IMR-90 (cell line): ENCODE measurements at regions of chr5 and their contacts with region 1.

Region 1: GRCh38 chr5:33969572-33970452 is 14.7 kb downstream of the SLC45A2 start:
- DNase-seq: peak; percentile 71
- ATAC-seq: peak; percentile 98
- H3K4me3 ChIP-seq: no peak overlapping the region
- H3K27ac ChIP-seq: no peak overlapping the region
- H3K4me1 ChIP-seq: peaks cover 1% of the 10 kb centered on the region; the same call in 1 of the 2 replicates
- H3K27me3 ChIP-seq: peaks cover 6% of the 10 kb centered on the region
- CTCF ChIP-seq: peak; percentile 84
- POLR2A ChIP-seq: no peak
- RAD21 ChIP-seq: peak; percentile 93

Region 2: DNA sequence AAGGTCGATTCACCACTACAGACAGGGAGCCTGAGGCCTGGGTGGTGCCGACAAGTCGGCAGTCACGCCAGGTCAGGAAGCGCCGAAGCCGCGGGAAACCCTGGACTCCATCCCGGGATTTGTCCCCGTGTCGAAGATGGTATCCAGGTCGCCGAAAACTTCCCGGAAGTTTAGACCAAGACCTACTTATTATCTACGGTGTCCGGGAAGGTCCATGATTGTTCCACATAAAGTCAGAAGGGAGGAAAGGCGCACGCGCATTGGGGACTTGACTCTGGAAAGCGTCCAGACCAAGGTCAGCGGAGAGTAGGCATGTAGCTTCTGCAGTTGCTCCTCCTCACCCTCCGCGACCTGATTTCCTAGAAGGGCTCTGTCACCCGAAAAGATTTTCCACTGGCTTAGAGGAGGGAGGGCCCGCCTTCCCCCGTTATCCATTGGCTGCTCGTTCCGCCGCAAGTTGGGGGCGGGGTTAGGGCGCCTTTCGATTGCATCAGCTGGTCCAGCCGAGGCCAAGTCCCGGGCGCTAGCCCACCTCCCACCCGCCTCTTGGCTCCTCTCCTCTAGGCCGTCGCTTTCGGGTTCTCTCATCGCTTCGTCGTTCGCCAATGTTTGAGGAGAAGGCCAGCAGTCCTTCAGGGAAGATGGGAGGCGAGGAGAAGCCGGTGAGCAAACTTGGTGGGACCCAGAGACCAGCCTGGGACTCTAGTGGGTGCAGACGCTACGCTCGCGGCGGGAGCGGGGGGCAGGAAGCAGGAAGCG is 529.2 kb before region 1 on chr5 and contains the start of gene TARS1:
- CTCF ChIA-PET with region 1: interaction called, 12 read pairs
- POLR2A ChIA-PET with region 1: no interaction called
- dilution Hi-C with region 1: no loop called
- in situ Hi-C with region 1: no loop called
- intact Hi-C with region 1: loop called (anchors 1 kb)
- DNase-seq: peak; percentile 100
- ATAC-seq: peak; percentile 94
- H3K4me3 ChIP-seq: peak within 1 kb of the TSS; percentile 68
- H3K27ac ChIP-seq: peak within 1 kb of the TSS; percentile 97
- H3K4me1 ChIP-seq: peaks cover 2% of the 10 kb centered on the region; the same call in 1 of the 2 replicates
- H3K27me3 ChIP-seq: no peaks in the 10 kb centered on the region
- CTCF ChIP-seq: no peak
- POLR2A ChIP-seq: peak; percentile 91
- RAD21 ChIP-seq: no peak
- total RNA-seq, gene TARS1: 175 and 219 TPM in 2 replicates

Region 3: GRCh38 chr5:33470544-33470943 is 499.3 kb before region 1 on chr5:
- CTCF ChIA-PET with region 1: interaction called, 6 read pairs
- POLR2A ChIA-PET with region 1: no interaction called
- dilution Hi-C with region 1: no loop called
- in situ Hi-C with region 1: no loop called
- intact Hi-C with region 1: loop called (anchors 1 kb)
- DNase-seq: peak; percentile 60
- ATAC-seq: peak; percentile 68
- H3K4me3 ChIP-seq: no peak overlapping the region
- H3K27ac ChIP-seq: no peak overlapping the region
- H3K4me1 ChIP-seq: no peaks in the 10 kb centered on the region
- H3K27me3 ChIP-seq: no peaks in the 10 kb centered on the region
- CTCF ChIP-seq: peak; percentile 46
- POLR2A ChIP-seq: no peak
- RAD21 ChIP-seq: peak; percentile 60

Region 4: GRCh38 chr5:33477816-33478215 is 492.0 kb before region 1 on chr5:
- CTCF ChIA-PET with region 1: no interaction called
- POLR2A ChIA-PET with region 1: interaction called, 20 read pairs
- dilution Hi-C with region 1: no loop called
- in situ Hi-C with region 1: no loop called
- intact Hi-C with region 1: no loop called
- DNase-seq: no peak
- ATAC-seq: no peak
- H3K4me3 ChIP-seq: no peak overlapping the region
- H3K27ac ChIP-seq: no peak overlapping the region
- H3K4me1 ChIP-seq: no peaks in the 10 kb centered on the region
- H3K27me3 ChIP-seq: no peaks in the 10 kb centered on the region
- CTCF ChIP-seq: no peak
- POLR2A ChIP-seq: no peak
- RAD21 ChIP-seq: no peak

Region 5: DNA sequence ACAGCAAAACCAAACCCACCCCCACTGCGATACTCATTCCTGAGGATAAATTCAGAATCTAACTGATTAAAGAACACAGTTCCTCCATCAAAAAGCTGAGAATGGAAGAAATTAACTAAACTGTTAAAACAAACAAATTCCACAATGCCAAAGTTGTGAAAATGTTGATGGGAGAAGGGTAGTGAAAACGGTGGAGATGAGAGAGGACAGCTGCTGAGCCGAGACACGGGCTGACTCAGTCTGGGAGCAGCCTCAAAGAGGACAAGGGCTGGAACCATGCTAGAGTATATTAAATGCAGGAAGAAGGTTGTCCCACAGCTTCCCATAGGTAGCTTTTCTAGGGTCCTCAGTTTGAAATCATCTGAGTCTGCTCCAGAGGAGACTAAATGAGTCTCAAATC is 92.4 kb before region 1 on chr5:
- CTCF ChIA-PET with region 1: no interaction called
- POLR2A ChIA-PET with region 1: no interaction called
- dilution Hi-C with region 1: no loop called
- in situ Hi-C with region 1: no loop called
- intact Hi-C with region 1: no loop called
- DNase-seq: no peak
- ATAC-seq: no peak
- H3K4me3 ChIP-seq: no peak overlapping the region
- H3K27ac ChIP-seq: no peak overlapping the region
- H3K4me1 ChIP-seq: no peaks in the 10 kb centered on the region
- H3K27me3 ChIP-seq: no peaks in the 10 kb centered on the region
- CTCF ChIP-seq: no peak
- POLR2A ChIP-seq: no peak
- RAD21 ChIP-seq: no peak

Region 6: DNA sequence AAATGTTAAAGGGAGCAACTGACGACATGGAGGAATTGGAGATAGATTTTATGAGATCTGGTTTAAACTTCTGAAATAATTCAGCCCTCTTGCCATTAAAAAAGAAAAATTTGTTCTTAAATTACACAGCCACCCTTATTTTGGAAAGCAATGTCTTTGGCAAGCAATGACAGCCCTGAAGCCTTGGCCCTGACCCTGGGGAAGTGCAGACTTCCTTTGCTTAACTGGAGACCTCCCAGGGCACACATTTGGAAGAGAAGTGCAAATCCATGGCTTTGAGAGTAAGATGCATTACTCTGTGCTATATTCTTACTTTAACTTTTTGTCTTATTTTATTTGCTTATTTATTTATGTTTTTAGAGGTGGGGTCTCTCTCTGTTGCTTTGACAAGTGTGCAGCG is 11.6 kb before region 1 on chr5:
- CTCF ChIA-PET with region 1: interaction called, 11 read pairs
- POLR2A ChIA-PET with region 1: no interaction called
- dilution Hi-C with region 1: no loop called
- in situ Hi-C with region 1: no loop called
- intact Hi-C with region 1: no loop called
- DNase-seq: no peak
- ATAC-seq: no peak
- H3K4me3 ChIP-seq: no peak overlapping the region
- H3K27ac ChIP-seq: no peak overlapping the region
- H3K4me1 ChIP-seq: no peaks in the 10 kb centered on the region
- H3K27me3 ChIP-seq: peaks cover 26% of the 10 kb centered on the region
- CTCF ChIP-seq: no peak
- POLR2A ChIP-seq: no peak
- RAD21 ChIP-seq: no peak